ENCODE measurements at regions of chr1 and their contacts with region 1.

Region 1: DNA sequence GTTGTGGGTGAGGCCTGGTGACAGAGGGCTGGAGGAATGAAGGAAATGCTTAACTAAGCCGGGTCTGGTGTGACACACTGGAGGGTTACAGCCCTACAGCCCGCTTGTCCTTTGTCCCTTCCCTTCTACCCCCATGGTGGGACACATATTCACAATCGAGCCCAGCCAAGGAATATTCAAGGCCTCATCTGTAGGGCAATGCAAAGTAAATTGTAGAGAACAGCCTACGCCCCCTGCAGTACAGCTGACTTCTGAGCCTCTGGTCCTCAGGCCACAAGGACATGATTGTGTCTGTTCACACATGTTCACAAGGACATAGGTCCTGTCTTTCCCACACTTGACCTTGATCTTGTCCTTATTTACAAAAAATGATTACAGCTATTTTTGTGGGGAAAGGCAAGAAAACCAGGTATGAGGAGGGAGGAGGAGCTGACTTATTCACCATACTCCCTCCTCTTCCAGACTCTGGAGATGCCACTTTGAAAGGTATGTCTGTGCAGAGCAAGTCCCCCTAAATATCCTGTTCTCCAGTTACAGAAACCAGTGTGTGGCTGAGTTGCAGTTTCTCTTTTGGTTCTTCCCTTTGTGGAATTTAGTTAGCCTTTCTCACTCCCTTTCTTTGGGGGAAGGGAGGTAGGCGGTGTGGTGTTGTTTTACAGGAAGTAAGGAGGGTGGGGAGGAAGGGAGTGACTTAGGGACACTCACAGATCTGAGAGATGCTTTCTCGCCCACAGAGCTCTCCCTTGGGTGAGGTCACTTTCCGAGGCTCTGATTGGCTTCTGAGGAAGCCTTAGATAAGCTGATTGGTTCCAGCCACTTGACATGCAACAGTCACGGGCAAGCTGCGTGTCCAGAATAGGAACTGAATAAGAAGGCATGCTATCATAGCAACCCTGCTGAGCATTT is 14.6 kb downstream of the POLR3GL start:
- DNase-seq: peak; percentile 95
- H3K4me3 ChIP-seq: peak overlapping the region in 1 of 2 donors; percentile 8
- H3K27ac ChIP-seq: peak overlapping the region; percentile 88 to 90
- H3K4me1 ChIP-seq: peaks cover 17% of the 10 kb centered on the region
- H3K27me3 ChIP-seq: no peaks in the 10 kb centered on the region
- CTCF ChIP-seq: peak in 2 of 4 experiments; percentile 1 to 22
- POLR2A ChIP-seq: peak; percentile 73

Region 2: GRCh38 chr1:145927063-145927886 is 51.8 kb before region 1 on chr1 and contains the start of gene RBM8A:
- intact Hi-C with region 1: no loop called
- DNase-seq: peak; percentile 96
- H3K4me3 ChIP-seq: peak within 1 kb of the TSS; percentile 56 to 78
- H3K27ac ChIP-seq: peak within 1 kb of the TSS; percentile 94 to 95
- H3K4me1 ChIP-seq: no peaks in the 10 kb centered on the region
- H3K27me3 ChIP-seq: no peaks in the 10 kb centered on the region
- CTCF ChIP-seq: peak; percentile 28 to 83 (median 53)
- POLR2A ChIP-seq: peak; percentile 99
- total RNA-seq, gene RBM8A: 127 to 159 TPM

Region 3: GRCh38 chr1:145996433-145997015 is 17.4 kb after region 1 on chr1 and contains the start of gene TXNIP:
- intact Hi-C with region 1: loop called (anchors 2 kb)
- DNase-seq: peak; percentile 100
- H3K4me3 ChIP-seq: peak within 1 kb of the TSS; percentile 48 to 64
- H3K27ac ChIP-seq: peak within 1 kb of the TSS; percentile 96 to 97
- H3K4me1 ChIP-seq: peaks cover 10% of the 10 kb centered on the region
- H3K27me3 ChIP-seq: no peaks in the 10 kb centered on the region
- CTCF ChIP-seq: peak in 2 of 4 experiments; percentile 9 to 24
- POLR2A ChIP-seq: peak; percentile 88
- total RNA-seq, gene TXNIP: 618 to 736 TPM

Region 4: DNA sequence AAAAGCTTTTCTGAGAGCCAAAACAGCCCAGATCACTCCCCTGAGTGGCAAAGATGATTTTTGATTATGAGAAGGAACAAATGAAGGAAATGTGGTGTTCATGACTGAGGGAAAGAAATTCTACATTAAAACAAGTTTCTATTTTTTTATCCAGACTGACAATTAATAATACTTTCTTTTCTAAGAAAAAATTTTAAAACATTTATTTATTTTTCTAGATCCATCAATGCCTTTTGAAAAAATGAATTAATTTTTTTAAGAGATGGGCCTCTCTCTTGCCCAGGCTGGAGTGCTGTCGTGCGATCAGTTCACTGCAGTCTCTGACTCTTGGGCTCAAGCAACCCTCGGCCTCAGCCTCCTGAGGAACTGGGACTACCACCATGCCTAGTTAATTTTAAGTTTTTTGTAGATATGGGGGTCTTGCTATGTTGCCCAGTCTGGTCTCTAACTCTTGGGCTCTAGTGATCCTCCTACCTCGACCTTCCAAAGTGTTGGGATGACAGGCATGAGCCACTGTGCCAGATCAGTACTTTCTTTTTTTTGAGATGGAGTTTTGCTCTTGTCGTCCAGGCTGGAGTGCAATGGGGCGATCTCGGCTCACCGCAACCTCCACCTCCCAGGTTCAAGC is 28.5 kb after region 1 on chr1:
- intact Hi-C with region 1: loop called (anchors 2 kb)
- DNase-seq: no peak
- H3K4me3 ChIP-seq: no peak overlapping the region
- H3K27ac ChIP-seq: peak overlapping the region; percentile 69 to 71
- H3K4me1 ChIP-seq: no peaks in the 10 kb centered on the region
- H3K27me3 ChIP-seq: no peaks in the 10 kb centered on the region
- CTCF ChIP-seq: no peak
- POLR2A ChIP-seq: no peak

Measured in prostate gland (tissue), 2 donors.